ENCODE measurements at regions of chr3 and their contacts with region 1.

Region 1: DNA sequence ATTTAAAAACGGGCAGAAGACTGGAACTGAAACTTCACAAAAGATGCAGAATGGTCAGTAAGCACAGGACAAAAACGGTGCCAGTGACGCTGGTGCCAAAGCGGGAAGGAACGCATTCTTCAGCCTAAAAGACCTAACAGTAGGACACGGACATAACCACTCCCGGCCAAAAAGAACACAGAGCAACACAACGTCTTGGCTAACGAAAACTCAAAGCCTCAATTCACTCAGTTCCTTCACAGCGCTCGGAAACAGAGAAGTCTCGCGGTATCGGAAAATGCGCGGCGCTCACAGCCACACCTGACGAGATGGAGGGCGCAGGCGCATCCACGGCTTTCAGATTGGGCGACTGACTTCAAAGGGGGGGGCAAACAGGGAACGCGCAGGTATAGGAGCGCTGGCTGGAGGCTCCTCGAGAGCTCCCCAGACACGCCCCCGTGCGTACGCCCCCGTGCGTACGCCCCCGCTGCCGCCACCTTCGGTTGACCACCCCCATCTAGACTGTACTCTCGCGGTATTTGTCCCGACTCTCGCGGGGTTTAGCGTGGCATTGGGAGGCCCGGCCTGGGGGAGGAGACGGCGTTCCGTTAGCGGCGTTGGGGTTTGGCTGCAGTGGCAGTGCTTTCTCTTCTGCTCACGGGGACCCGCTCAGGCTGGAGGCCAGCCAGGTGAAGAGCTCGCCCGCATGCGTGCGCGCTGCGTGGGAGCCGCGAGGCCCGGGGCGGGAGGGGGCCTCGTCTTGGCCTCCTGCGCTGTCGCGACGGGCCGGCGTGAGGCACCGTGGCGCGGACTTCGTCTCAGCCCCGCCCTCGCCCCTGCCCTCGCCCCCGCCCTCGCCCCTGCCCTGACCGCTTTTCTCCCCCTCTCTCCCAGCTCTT is at the start of gene NKTR:
- DNase-seq: peak; percentile 99
- H3K4me3 ChIP-seq: peak within 1 kb of the TSS; percentile 70 to 99 (median 85)
- H3K27ac ChIP-seq: peak within 1 kb of the TSS; percentile 62
- H3K4me1 ChIP-seq: peaks cover 9% of the 10 kb centered on the region
- H3K27me3 ChIP-seq: no peaks in the 10 kb centered on the region
- CTCF ChIP-seq: peak in 1 of 2 donors; percentile 14
- POLR2A ChIP-seq: peak; percentile 99
- total RNA-seq, gene NKTR: 92.6 and 99.0 TPM in 2 replicates

Region 2: GRCh38 chr3:42581709-42582473 is 18.5 kb before region 1 on chr3 and contains the start of gene SEC22C:
- CTCF ChIA-PET with region 1: interaction called, 6 read pairs
- POLR2A ChIA-PET with region 1: interaction called, 4 read pairs
- dilution Hi-C with region 1: no loop called
- intact Hi-C with region 1: loop called (anchors 1 kb)
- DNase-seq: peak; percentile 94
- H3K4me3 ChIP-seq: peak within 1 kb of the TSS; percentile 80 to 82 (median 81)
- H3K27ac ChIP-seq: peak within 1 kb of the TSS; percentile 70
- H3K4me1 ChIP-seq: peaks cover 18% of the 10 kb centered on the region
- H3K27me3 ChIP-seq: no peaks in the 10 kb centered on the region
- CTCF ChIP-seq: peak in 1 of 2 donors; percentile 24
- POLR2A ChIP-seq: peak; percentile 76
- total RNA-seq, gene SEC22C: 60.7 and 61.9 TPM in 2 replicates

Region 3: GRCh38 chr3:42613462-42613861 is 13.1 kb after region 1 on chr3:
- CTCF ChIA-PET with region 1: interaction called, 28 read pairs
- POLR2A ChIA-PET with region 1: interaction called, 4 read pairs
- dilution Hi-C with region 1: no loop called
- intact Hi-C with region 1: loop called (anchors 1 kb)
- DNase-seq: peak; percentile 36
- H3K4me3 ChIP-seq: no peak overlapping the region
- H3K27ac ChIP-seq: no peak overlapping the region
- H3K4me1 ChIP-seq: peaks cover 32% of the 10 kb centered on the region
- H3K27me3 ChIP-seq: no peaks in the 10 kb centered on the region
- CTCF ChIP-seq: peak in 1 of 2 donors; percentile 9
- POLR2A ChIP-seq: no peak

Region 4: DNA sequence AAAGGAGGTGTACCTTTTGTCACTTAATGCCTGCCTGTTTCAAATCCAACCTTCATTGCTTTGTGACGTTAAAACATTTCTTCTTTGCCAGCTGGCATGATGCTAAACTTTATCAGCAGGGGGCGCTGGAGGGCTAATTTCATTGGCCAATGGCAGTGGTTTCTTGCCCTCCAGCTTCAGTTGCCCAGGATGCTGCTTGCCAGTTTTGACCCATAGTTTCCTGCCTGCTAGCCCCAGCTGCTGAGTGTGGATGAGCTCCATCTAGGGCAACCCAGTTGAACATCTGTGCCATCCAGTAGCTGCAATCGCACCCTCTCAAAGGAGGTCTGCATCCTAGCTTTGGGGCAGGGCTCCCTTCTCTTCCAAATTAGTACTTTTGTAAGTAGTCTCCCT is 231.0 kb after region 1 on chr3:
- CTCF ChIA-PET with region 1: no interaction called
- POLR2A ChIA-PET with region 1: no interaction called
- dilution Hi-C with region 1: no loop called
- intact Hi-C with region 1: no loop called
- DNase-seq: peak; percentile 52
- H3K4me3 ChIP-seq: no peak overlapping the region
- H3K27ac ChIP-seq: no peak overlapping the region
- H3K4me1 ChIP-seq: no peaks in the 10 kb centered on the region
- H3K27me3 ChIP-seq: peaks cover 6 to 8% of the 10 kb centered on the region in 2 experiments
- CTCF ChIP-seq: peak; percentile 73 to 77
- POLR2A ChIP-seq: no peak

Region 5: GRCh38 chr3:42906070-42906847 is 305.9 kb after region 1 on chr3 and contains the start of gene ZNF662:
- CTCF ChIA-PET with region 1: no interaction called
- POLR2A ChIA-PET with region 1: no interaction called
- dilution Hi-C with region 1: no loop called
- intact Hi-C with region 1: no loop called
- DNase-seq: no peak
- H3K4me3 ChIP-seq: peak within 1 kb of the TSS in 1 of 3 experiments; percentile 16
- H3K27ac ChIP-seq: no peak within 1 kb of the TSS
- H3K4me1 ChIP-seq: no peaks in the 10 kb centered on the region
- H3K27me3 ChIP-seq: peaks cover 14 to 18% of the 10 kb centered on the region in 2 experiments
- CTCF ChIP-seq: no peak
- POLR2A ChIP-seq: no peak
- total RNA-seq, gene ZNF662: 0.83 and 4.3 TPM in 2 replicates